ENCODE measurements at regions of chr11 and their contacts with region 1.

Region 1: DNA sequence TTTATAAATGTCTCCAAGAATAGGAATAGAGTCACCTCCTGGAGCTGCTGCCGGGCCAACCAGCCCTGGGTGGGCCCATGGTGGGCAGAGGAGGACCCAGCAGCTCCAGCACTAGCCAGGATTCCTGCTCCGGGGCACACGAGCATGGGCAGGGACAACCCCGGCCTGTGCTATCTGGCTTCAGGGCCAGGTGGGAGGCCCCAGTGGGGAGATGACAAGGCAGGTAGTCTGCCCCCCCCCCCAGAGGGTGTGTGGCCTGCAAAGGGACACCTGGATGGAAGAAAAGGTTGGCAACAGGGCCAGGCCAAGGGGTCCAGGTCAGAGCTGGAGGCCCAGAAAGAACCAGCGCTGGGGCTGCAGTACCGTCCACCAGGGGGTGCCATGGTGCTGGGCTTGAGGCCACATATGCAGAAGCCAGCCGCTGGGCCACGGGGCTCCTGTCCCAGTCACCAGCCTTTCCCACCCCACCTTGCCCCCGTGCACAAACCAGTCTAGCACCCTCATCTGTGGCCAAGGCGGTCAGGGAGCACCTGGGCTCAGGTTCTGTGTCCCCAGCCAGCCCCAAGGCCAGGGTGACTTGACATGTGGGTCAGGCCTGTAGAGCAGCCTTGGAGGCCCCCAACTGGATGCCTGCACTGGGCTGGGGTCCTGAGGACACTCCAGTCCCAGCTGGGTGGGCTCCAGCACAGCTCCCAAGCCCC is 3.5 kb downstream of the TSPAN32 start:
- DNase-seq: peak; percentile 79 to 89
- H3K4me3 ChIP-seq: no peak overlapping the region
- H3K27ac ChIP-seq: peak overlapping the region in 1 of 2 donors; percentile 5
- H3K4me1 ChIP-seq: peaks cover 0 to 42% (median 36%) of the 10 kb centered on the region in 4 donors
- H3K27me3 ChIP-seq: peaks cover 0 to 19% of the 10 kb centered on the region in 2 donors
- CTCF ChIP-seq: peak; percentile 89 to 96

Region 2: GRCh38 chr11:1921574-1922141 is 383.6 kb before region 1 on chr11:
- intact Hi-C with region 1: no loop called
- DNase-seq: peak; percentile 60 to 73
- H3K4me3 ChIP-seq: no peak overlapping the region
- H3K27ac ChIP-seq: peak overlapping the region in 1 of 2 donors; percentile 49
- H3K4me1 ChIP-seq: peaks cover 0 to 20% (median 6%) of the 10 kb centered on the region in 4 donors
- H3K27me3 ChIP-seq: peaks cover 0 to 36% of the 10 kb centered on the region in 2 donors
- CTCF ChIP-seq: no peak

Region 3: GRCh38 chr11:2428322-2428795 is 123.1 kb after region 1 on chr11:
- intact Hi-C with region 1: loop called (anchors 2 kb)
- DNase-seq: peak in 1 of 2 donors; percentile 71
- H3K4me3 ChIP-seq: no peak overlapping the region
- H3K27ac ChIP-seq: no peak overlapping the region
- H3K4me1 ChIP-seq: no peaks in the 10 kb centered on the region
- H3K27me3 ChIP-seq: peaks cover 0 to 50% of the 10 kb centered on the region in 2 donors
- CTCF ChIP-seq: peak; percentile 43 to 46

Region 4: GRCh38 chr11:2892215-2893020 is 587.1 kb after region 1 on chr11:
- intact Hi-C with region 1: loop called (anchors 10 kb)
- DNase-seq: peak in 1 of 2 donors; percentile 76
- H3K4me3 ChIP-seq: peak overlapping the region; percentile 39 to 51
- H3K27ac ChIP-seq: peak overlapping the region in 1 of 2 donors; percentile 43
- H3K4me1 ChIP-seq: peaks cover 0 to 33% (median 14%) of the 10 kb centered on the region in 4 donors
- H3K27me3 ChIP-seq: peaks cover 0 to 23% of the 10 kb centered on the region in 2 donors
- CTCF ChIP-seq: peak; percentile 80 to 86